ENCODE measurements at regions of chr2 and their contacts with region 1.

Region 1: DNA sequence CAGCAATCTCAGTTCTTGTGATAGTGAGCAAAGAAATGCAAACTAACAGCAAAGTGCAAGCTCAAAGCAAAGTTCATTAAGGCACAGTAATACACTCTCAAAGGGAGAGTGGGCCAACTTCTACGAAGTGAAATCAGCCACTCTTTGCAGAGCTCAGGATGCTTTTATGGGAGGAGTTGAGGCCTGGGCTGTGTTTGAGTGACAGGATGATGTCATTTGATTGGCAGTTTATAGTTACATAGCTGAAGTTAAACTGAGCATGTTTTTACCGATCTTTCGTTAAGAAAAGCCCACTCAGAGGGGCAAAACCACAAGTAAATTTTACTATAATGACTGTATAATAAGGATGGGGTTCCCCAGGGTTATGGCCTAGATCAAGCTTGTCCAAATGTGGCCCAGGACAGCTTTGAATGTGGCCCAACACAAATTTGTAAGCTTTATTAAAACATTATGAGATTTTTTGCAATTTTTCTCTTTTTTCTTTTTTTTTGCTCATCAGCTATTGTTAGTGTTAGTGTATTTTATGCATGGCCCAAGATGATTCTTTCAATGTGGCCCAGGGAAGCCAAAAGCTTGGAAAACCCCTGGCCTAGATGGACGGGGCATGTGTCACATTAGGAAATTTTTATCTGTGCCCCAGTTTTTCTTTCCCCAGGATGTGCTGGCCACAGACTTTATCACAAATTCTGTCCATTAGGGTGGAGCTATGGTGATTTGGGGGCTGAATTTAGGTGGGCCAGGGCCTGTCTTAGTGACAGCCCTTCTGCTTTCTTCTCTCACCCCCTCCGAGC is 8.3 kb upstream of the DNAH7 start:
- DNase-seq: no peak
- H3K4me3 Mint-ChIP-seq: no peak overlapping the region
- H3K27ac Mint-ChIP-seq: no peak overlapping the region
- H3K4me1 Mint-ChIP-seq: peaks cover 15% of the 10 kb centered on the region
- H3K27me3 Mint-ChIP-seq: no peaks in the 10 kb centered on the region
- CTCF ChIP-seq: no peak

Region 2: GRCh38 chr2:195838002-195838401 is 239.0 kb before region 1 on chr2:
- CTCF ChIA-PET with region 1: no interaction called
- intact Hi-C with region 1: no loop called
- DNase-seq: no peak
- H3K4me3 Mint-ChIP-seq: no peak overlapping the region
- H3K27ac Mint-ChIP-seq: no peak overlapping the region
- H3K4me1 Mint-ChIP-seq: no peaks in the 10 kb centered on the region
- H3K27me3 Mint-ChIP-seq: no peaks in the 10 kb centered on the region
- CTCF ChIP-seq: no peak

Region 3: GRCh38 chr2:196113061-196113974 is 36.3 kb after region 1 on chr2:
- CTCF ChIA-PET with region 1: interaction called, 5 read pairs
- intact Hi-C with region 1: loop called (anchors 1 kb)
- DNase-seq: peak; percentile 19
- H3K4me3 Mint-ChIP-seq: peak overlapping the region; percentile 56
- H3K27ac Mint-ChIP-seq: peak overlapping the region; percentile 95
- H3K4me1 Mint-ChIP-seq: peaks cover 20% of the 10 kb centered on the region
- H3K27me3 Mint-ChIP-seq: no peaks in the 10 kb centered on the region
- CTCF ChIP-seq: no peak

Region 4: GRCh38 chr2:196171248-196171871 is 94.4 kb after region 1 on chr2 and contains the start of gene STK17B:
- CTCF ChIA-PET with region 1: interaction called, 7 read pairs
- intact Hi-C with region 1: loop called (anchors 1 kb)
- DNase-seq: peak; percentile 95
- H3K4me3 Mint-ChIP-seq: peak within 1 kb of the TSS; percentile 82
- H3K27ac Mint-ChIP-seq: peak within 1 kb of the TSS; percentile 83
- H3K4me1 Mint-ChIP-seq: peaks cover 31% of the 10 kb centered on the region
- H3K27me3 Mint-ChIP-seq: no peaks in the 10 kb centered on the region
- CTCF ChIP-seq: no peak
- total RNA-seq, gene STK17B: 32.3 and 38.5 TPM in 2 replicates

Region 5: GRCh38 chr2:196195302-196195701 is 118.3 kb after region 1 on chr2:
- CTCF ChIA-PET with region 1: no interaction called
- intact Hi-C with region 1: no loop called
- DNase-seq: no peak
- H3K4me3 Mint-ChIP-seq: no peak overlapping the region
- H3K27ac Mint-ChIP-seq: no peak overlapping the region
- H3K4me1 Mint-ChIP-seq: no peaks in the 10 kb centered on the region
- H3K27me3 Mint-ChIP-seq: no peaks in the 10 kb centered on the region
- CTCF ChIP-seq: no peak

Region 6: DNA sequence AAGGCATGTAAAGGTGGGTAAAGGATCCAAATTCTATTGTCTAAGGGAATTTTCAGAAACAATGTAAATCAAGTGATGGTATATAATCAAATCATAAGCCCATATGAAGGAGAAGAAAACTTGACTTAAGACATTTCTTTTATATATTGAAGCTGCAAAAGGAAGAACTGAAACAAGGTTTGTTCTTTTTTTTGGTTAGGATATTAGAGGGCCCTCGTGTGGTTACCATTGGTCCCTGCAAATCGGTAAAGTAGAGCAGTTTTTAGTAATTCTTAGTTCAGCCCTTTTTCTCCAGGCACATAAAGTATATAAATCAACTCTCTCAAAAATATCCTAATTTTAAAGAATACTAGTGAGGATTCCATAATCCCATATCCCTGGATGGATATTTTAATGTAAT is 200.0 kb after region 1 on chr2:
- CTCF ChIA-PET with region 1: interaction called, 17 read pairs
- intact Hi-C with region 1: loop called (anchors 1 kb)
- DNase-seq: peak; percentile 13
- H3K4me3 Mint-ChIP-seq: no peak overlapping the region
- H3K27ac Mint-ChIP-seq: no peak overlapping the region
- H3K4me1 Mint-ChIP-seq: peaks cover 48% of the 10 kb centered on the region
- H3K27me3 Mint-ChIP-seq: no peaks in the 10 kb centered on the region
- CTCF ChIP-seq: peak; percentile 45

Region 7: DNA sequence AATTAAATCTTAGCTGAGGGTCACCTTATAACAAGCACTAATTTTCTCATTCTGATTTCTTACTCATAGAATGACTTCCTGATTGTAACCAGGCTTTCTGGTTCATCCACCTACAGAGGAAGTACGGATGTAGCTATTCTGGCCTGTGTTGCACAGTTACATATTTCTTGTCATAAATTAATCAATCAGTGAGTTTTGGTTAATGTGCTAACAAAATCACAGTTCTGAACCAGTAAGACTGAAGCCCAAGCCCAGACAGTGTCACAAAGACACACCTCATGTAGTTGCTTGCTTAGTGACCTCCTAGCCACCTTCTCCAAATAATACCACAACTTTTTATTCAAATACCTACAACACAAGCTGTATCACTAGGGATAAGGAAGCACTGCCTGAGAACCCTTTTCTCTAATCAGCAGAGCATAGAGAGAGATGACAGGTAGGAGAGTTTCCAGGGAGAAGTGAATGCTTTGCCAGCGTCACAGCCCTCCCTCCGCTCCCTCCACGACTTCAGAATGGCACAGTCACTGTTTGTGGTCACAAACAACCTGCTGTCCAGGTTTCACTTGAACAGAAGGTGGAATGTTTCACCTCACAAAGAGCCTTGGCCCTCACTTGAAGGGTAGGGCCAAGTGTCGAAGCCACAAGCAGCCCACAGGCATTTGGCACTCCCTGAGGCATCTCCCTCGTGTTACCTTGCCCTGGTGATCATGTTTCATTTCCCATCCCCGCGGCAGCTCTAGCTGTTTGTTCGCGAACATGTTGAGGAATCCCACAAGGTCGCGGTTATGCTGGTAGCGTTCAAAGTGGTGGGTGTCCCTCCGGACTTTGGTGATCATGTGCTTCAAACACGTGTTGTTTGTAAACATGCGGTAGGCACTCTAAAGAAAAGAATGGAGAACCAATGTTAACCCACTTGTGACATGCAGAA is 215.2 kb after region 1 on chr2:
- CTCF ChIA-PET with region 1: interaction called, 11 read pairs
- intact Hi-C with region 1: loop called (anchors 1 kb)
- DNase-seq: peak; percentile 91
- H3K4me3 Mint-ChIP-seq: peak overlapping the region; percentile 49
- H3K27ac Mint-ChIP-seq: peak overlapping the region; percentile 99
- H3K4me1 Mint-ChIP-seq: peaks cover 56% of the 10 kb centered on the region
- H3K27me3 Mint-ChIP-seq: no peaks in the 10 kb centered on the region
- CTCF ChIP-seq: no peak

Region 8: GRCh38 chr2:196337208-196337953 is 260.4 kb after region 1 on chr2:
- CTCF ChIA-PET with region 1: interaction called, 23 read pairs
- intact Hi-C with region 1: loop called (anchors 1 kb)
- DNase-seq: peak; percentile 34
- H3K4me3 Mint-ChIP-seq: no peak overlapping the region
- H3K27ac Mint-ChIP-seq: no peak overlapping the region
- H3K4me1 Mint-ChIP-seq: peaks cover 34% of the 10 kb centered on the region
- H3K27me3 Mint-ChIP-seq: no peaks in the 10 kb centered on the region
- CTCF ChIP-seq: peak; percentile 64

Region 9: DNA sequence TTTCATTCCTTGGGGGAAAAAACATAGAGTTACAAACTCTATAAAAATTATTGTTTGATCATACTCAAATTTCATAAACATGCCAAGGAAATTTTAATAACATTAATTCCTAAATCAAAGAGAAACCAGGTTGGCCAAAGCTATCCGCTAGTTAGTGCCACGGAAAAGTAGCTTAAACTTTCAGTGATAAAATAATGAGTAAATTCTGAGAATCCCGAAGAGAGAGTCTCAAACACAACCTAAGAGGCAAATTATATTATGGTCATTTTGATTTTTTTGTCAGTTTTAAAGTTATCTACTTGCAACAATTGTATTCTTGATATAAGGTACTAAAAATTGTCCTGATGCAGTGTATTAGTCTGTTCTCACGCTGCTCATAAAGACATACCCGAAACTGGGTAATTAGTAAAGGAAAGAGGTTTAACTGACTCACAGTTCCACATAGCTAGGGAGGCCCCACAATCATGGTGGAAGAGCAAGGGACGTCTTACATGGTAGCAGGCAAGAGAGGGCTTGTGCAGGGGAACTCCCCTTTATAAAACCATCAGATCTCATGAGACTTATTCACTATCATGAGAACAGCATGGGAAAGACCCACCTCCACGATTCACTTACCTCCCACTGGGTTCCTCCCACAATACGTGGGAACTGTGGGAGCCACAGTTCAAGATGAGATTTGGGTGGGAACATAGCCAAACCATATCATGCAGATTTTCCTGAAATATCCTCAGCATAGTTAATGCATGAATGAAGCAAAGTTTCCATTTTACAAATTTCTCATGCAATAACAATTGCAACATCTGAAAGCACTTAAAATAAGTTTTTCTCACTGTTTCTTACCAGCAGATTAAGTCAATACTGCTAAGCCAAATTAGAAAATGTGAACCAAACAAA is 300.3 kb after region 1 on chr2:
- CTCF ChIA-PET with region 1: no interaction called
- intact Hi-C with region 1: no loop called
- DNase-seq: no peak
- H3K4me3 Mint-ChIP-seq: no peak overlapping the region
- H3K27ac Mint-ChIP-seq: no peak overlapping the region
- H3K4me1 Mint-ChIP-seq: no peaks in the 10 kb centered on the region
- H3K27me3 Mint-ChIP-seq: no peaks in the 10 kb centered on the region
- CTCF ChIP-seq: no peak

Region 10: DNA sequence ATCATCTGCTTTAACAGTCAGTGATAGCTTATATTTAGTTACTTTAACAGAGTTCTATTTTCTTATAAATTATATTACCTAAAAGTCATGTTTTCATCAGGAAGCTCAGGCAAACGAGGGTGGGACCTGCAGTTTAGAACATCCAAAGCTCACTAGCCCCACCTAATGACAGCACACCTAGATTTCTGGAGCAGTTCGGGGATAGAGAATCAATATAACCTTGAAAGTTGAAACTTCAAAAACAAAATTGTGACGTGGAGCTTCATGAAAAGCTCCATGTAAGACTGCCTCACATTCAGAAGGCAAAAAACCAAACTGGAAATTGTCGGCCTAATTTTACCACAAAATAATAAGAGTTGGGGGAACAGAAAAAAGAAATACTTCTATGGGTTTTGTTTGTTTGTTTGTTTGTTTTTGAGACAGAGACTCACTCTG is 376.7 kb after region 1 on chr2:
- CTCF ChIA-PET with region 1: interaction called, 11 read pairs
- intact Hi-C with region 1: loop called (anchors 1 kb)
- DNase-seq: peak; percentile 66
- H3K4me3 Mint-ChIP-seq: no peak overlapping the region
- H3K27ac Mint-ChIP-seq: no peak overlapping the region
- H3K4me1 Mint-ChIP-seq: no peaks in the 10 kb centered on the region
- H3K27me3 Mint-ChIP-seq: no peaks in the 10 kb centered on the region
- CTCF ChIP-seq: peak; percentile 75

Measured in Calu3 (cell line).